Sciatic nerve (tissue), 2 donors: ENCODE measurements at regions of chr7 and their contacts with region 1.

Region 1: DNA sequence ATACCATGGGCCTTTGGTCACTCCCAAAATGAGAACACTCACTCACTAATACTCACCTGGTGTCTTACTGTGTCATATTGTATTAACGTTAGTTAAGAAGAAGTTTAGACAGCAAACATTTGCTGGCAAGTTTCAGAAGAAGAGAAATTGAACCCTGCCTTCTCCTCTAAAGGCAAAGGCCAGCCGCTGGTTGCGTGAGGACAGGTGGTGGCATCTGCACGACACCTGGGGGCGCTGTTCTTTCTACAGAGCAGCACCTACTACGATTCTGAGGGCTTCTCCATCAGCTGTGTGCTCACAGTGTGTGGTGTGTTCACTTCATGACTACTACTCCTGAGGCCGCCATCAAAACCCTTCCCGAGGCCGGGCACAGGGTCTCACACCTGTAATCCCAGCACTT is 17.9 kb upstream of the CLEC2L start:
- DNase-seq: no peak
- ATAC-seq: no peak

Region 2: DNA sequence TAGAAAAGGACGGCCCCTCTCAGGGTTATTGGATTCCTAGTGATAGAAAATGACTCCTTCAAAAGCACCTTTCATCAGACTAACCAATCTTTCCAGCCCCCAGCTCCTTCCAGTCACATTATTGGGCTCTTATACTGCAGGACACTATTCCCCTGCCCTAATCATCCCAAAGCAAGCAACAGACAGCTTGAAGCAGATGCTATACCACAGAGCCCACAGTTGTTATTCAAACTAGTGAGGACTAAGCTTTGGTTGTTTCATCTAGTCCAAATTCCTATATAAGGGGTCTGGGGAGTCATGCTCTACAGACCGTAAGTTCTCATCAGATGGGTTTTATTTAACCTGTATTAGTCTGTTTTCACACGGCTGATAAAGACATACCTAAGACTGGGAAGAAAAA is 494.2 kb before region 1 on chr7:
- intact Hi-C with region 1: no loop called
- DNase-seq: no peak
- ATAC-seq: no peak

Region 3: GRCh38 chr7:139321071-139321745 is 184.4 kb before region 1 on chr7:
- intact Hi-C with region 1: no loop called
- DNase-seq: no peak
- ATAC-seq: no peak

Region 4: GRCh38 chr7:139543801-139544603 is 38.4 kb after region 1 on chr7:
- intact Hi-C with region 1: no loop called
- DNase-seq: no peak
- ATAC-seq: no peak

Region 5: DNA sequence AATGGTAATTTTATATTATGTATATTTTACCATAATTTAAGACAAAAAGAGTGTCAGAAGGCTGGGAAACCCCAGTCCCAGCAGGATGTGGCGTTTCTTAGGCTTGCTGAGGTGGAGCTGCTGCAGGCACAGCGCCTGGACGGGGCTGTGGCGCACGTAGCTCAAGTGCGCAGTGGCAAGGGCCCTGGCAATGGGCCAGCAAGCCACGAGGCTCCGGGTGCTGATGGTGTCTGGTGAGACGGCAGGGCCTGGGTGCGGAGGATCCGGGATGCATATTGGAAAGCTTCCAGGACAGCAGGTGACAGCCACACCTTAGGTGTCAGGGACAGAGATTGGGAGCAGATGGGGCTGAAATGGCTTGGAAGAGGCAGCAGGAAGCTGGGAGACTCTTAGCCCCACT is 55.1 kb after region 1 on chr7:
- intact Hi-C with region 1: loop called (anchors 10 kb)
- DNase-seq: no peak
- ATAC-seq: no peak

Region 6: GRCh38 chr7:139635526-139636302 is 130.2 kb after region 1 on chr7:
- intact Hi-C with region 1: no loop called
- DNase-seq: no peak
- ATAC-seq: peak; percentile 44

Region 7: GRCh38 chr7:139995017-139995931 is 489.7 kb after region 1 on chr7:
- intact Hi-C with region 1: loop called (anchors 10 kb)
- DNase-seq: no peak
- ATAC-seq: peak; percentile 22